Activated CD4-positive, alpha-beta T cell treated with anti-CD3 and anti-CD28 coated beads for 36 hours (primary cell): ENCODE measurements at regions of chr9 and their contacts with region 1.

Region 1: GRCh38 chr9:68779558-68780384 is 74.7 kb downstream of the PIP5K1B start:
- DNase-seq: peak; percentile 96
- ATAC-seq: peak; percentile 87
- H3K4me3 Mint-ChIP-seq: no peak overlapping the region
- H3K27ac Mint-ChIP-seq: no peak overlapping the region
- H3K4me1 Mint-ChIP-seq: peaks cover 11% of the 10 kb centered on the region
- H3K27me3 Mint-ChIP-seq: peaks cover 6% of the 10 kb centered on the region

Region 2: DNA sequence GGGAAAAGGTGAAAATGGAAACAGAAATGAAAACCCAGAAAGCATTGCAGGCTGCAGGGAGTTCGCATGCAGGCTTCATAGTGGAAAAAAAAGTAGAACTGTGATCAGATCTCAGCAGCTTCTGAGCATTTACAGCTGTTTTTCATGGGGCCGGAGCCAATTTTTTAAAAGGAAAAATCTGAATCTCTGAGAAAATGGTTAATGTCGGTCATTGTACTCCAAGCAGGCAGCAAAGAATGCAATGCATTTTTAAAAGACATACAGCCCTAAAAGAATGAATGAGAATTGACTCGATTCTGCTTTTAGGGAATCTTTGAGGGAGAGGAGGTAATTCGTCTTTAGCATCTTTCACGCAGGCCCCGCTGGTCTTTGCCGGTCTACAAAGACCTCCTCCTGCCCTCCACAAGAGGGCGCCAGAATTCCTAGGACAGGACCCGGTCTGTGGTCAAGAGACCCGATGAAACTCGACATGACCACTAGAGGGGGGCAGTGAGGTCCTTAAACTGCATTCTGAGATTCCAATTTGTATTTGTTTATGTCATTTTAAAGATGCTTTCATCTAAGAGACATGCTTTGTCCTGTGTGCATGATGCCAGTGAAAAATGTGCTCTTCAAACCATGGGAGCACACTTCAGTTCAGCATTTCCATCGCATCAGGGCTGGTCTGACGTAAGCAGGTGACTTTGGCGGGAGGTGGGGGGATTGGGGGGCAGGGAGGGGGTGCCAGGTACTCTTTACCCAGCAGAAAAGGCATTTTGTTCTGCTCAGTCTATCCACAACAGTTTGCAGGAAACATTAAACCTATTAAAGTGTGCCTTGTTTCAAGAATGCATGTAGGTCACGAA is 195.4 kb before region 1 on chr9:
- CTCF ChIA-PET with region 1: interaction called, 3 read pairs
- POLR2A ChIA-PET with region 1: no interaction called
- intact Hi-C with region 1: loop called in 1 of 2 experiments (anchors 1 kb)
- DNase-seq: peak; percentile 92
- ATAC-seq: peak; percentile 99
- H3K4me3 Mint-ChIP-seq: no peak overlapping the region
- H3K27ac Mint-ChIP-seq: no peak overlapping the region
- H3K4me1 Mint-ChIP-seq: peaks cover 3% of the 10 kb centered on the region
- H3K27me3 Mint-ChIP-seq: peaks cover 6% of the 10 kb centered on the region

Region 3: DNA sequence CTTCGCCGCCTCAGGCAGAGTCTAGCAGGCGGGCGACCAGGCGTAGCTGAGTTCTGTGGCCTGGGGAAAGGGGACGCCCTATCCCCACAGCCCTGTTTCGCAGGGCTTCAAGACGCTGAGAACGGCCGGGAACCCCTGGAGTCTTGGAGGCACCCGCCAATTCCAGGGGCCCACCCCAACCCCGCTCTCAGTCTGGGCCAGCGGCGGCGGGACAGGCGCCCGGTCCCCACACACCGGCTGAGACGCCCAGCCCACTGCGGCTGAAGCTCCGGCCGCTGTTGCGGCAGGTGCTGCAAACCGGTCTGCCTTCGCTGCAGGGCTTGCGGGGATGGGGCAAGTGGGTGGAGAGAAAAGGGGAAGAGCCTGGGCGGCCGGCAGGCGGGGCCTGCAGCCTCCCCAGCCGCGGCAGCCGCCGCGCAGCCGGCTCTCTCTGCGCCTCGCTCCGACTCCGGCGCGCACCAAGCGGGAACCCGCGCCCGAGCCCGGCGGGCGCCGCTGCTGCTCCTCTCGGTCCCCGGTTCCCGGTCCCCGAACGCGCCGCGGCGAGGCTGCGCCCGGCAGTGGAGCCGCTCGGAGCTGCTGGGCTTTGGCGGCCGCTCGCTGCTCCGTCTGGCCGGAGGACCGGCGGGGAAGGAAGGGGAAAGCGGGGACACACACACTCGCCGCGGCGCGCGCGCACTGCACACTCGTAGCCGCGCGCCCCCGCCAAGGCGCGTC is 74.8 kb before region 1 on chr9 and contains the start of gene PIP5K1B:
- CTCF ChIA-PET with region 1: interaction called, 3 read pairs
- POLR2A ChIA-PET with region 1: no interaction called
- intact Hi-C with region 1: loop called in 1 of 2 experiments (anchors 2 kb)
- DNase-seq: peak; percentile 78
- ATAC-seq: peak; percentile 97
- H3K4me3 Mint-ChIP-seq: peak within 1 kb of the TSS; percentile 76
- H3K27ac Mint-ChIP-seq: no peak within 1 kb of the TSS
- H3K4me1 Mint-ChIP-seq: peaks cover 18% of the 10 kb centered on the region
- H3K27me3 Mint-ChIP-seq: peaks cover 64% of the 10 kb centered on the region
- total RNA-seq, gene PIP5K1B: 1.6 TPM

Region 4: GRCh38 chr9:68949271-68950000 is 169.7 kb after region 1 on chr9:
- CTCF ChIA-PET with region 1: no interaction called
- POLR2A ChIA-PET with region 1: no interaction called
- intact Hi-C with region 1: loop called in 1 of 2 experiments (anchors 5 kb)
- DNase-seq: peak; percentile 55
- ATAC-seq: no peak
- H3K4me3 Mint-ChIP-seq: no peak overlapping the region
- H3K27ac Mint-ChIP-seq: peak overlapping the region; percentile 48
- H3K4me1 Mint-ChIP-seq: peaks cover 42% of the 10 kb centered on the region
- H3K27me3 Mint-ChIP-seq: peaks cover 13% of the 10 kb centered on the region

Region 5: GRCh38 chr9:68999393-69000105 is 219.8 kb after region 1 on chr9:
- CTCF ChIA-PET with region 1: interaction called, 4 read pairs
- POLR2A ChIA-PET with region 1: no interaction called
- intact Hi-C with region 1: loop called (anchors 1 to 5 kb)
- DNase-seq: peak; percentile 75
- ATAC-seq: peak; percentile 90
- H3K4me3 Mint-ChIP-seq: no peak overlapping the region
- H3K27ac Mint-ChIP-seq: peak overlapping the region; percentile 63
- H3K4me1 Mint-ChIP-seq: peaks cover 24% of the 10 kb centered on the region
- H3K27me3 Mint-ChIP-seq: peaks cover 2% of the 10 kb centered on the region

Region 6: GRCh38 chr9:70258692-70259511 is 1479.1 kb after region 1 on chr9 and contains the start of gene SMC5:
- CTCF ChIA-PET with region 1: no interaction called
- POLR2A ChIA-PET with region 1: no interaction called
- intact Hi-C with region 1: loop called in 1 of 2 experiments (anchors 10 kb)
- DNase-seq: peak; percentile 92
- ATAC-seq: peak; percentile 83
- H3K4me3 Mint-ChIP-seq: peak within 1 kb of the TSS; percentile 89
- H3K27ac Mint-ChIP-seq: peak within 1 kb of the TSS; percentile 96
- H3K4me1 Mint-ChIP-seq: peaks cover 54% of the 10 kb centered on the region
- H3K27me3 Mint-ChIP-seq: no peaks in the 10 kb centered on the region
- total RNA-seq, gene SMC5: 39.0 to 43.0 TPM